ENCODE measurements at regions of chr2 and their contacts with region 1.

Region 1: DNA sequence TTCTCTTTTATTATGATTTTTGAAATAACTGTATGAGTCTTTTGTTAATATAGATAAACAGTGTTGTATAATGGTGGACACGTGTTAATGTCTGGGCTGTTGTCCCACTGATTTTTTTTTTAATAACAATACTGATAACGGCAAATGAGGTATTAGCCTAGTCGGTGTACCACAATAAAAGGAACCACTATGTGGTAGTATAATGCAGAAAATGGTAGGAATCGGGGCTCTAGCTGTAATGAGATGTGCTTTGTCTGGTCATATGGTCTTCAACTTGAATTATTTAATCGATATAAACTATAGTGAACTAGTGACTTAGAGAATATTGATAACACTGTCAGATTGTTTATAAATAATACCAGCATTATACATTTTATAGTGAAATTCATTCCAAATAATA is 517.9 kb upstream of the SPHKAP start:
- DNase-seq: peak; percentile 5
- ATAC-seq: peak; percentile 45; the same call in 1 of the 2 replicates
- H3K4me3 ChIP-seq: no peak overlapping the region
- H3K27ac ChIP-seq: no peak overlapping the region
- H3K4me1 ChIP-seq: peaks cover 19% of the 10 kb centered on the region
- H3K27me3 ChIP-seq: no peaks in the 10 kb centered on the region
- CTCF ChIP-seq: peak; percentile 47; the same call in 1 of the 2 replicates

Region 2: DNA sequence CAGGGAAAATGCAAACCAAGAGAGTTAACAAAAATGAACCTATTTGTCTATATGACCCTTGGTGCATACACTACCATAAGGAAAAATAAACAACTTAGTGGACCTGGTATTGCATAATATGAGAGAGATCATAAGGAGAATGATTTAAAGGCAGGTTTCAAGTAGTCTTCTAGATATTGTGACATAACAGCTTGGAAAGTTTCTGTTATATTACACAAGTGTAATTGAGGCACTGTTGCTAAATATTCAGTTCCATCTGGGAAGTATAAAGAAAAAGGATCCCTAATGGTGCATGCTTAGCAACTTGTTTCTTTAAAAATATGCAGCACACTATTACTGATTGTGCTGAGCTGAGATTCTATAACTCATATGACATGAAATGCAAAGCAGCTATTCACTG is 265.7 kb before region 1 on chr2:
- CTCF ChIA-PET with region 1: no interaction called
- POLR2A ChIA-PET with region 1: no interaction called
- intact Hi-C with region 1: no loop called
- DNase-seq: no peak
- ATAC-seq: no peak
- H3K4me3 ChIP-seq: no peak overlapping the region
- H3K27ac ChIP-seq: no peak overlapping the region
- H3K4me1 ChIP-seq: no peaks in the 10 kb centered on the region
- H3K27me3 ChIP-seq: no peaks in the 10 kb centered on the region
- CTCF ChIP-seq: no peak

Region 3: DNA sequence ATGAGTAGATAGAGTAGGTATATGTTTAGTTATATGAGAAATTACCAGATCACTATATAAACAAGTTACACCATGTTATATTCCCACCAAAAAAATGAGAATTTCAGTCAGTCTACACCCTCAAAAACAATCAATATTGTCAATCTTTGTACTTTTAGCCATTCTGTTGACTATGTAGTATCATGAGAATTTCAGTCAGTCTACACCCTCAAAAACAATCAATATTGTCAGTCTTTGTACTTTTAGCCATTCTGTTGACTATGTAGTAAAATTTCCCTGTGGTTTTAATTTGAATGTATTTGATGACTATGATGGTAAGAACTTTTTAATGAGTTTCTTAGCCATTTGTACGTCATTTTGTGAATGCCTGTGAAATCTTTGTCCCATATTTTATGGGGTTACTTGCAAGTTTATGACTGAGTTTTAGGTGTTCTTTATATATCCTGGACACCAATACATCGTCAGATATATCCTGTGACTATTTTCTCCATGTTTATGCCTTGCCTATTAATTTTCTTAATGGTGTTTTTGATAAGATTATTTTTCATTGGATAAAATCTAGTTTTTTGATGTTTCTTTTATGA is 10.5 kb after region 1 on chr2:
- CTCF ChIA-PET with region 1: no interaction called
- POLR2A ChIA-PET with region 1: no interaction called
- intact Hi-C with region 1: loop called (anchors 1 kb)
- DNase-seq: peak; percentile 38
- ATAC-seq: peak; percentile 96
- H3K4me3 ChIP-seq: no peak overlapping the region
- H3K27ac ChIP-seq: peak overlapping the region; percentile 63
- H3K4me1 ChIP-seq: peaks cover 12% of the 10 kb centered on the region; the same call in 1 of the 2 replicates
- H3K27me3 ChIP-seq: no peaks in the 10 kb centered on the region
- CTCF ChIP-seq: no peak

Region 4: GRCh38 chr2:229133155-229133772 is 433.9 kb after region 1 on chr2:
- CTCF ChIA-PET with region 1: no interaction called
- POLR2A ChIA-PET with region 1: no interaction called
- intact Hi-C with region 1: loop called (anchors 5 kb)
- DNase-seq: peak; percentile 78
- ATAC-seq: peak; percentile 75
- H3K4me3 ChIP-seq: no peak overlapping the region
- H3K27ac ChIP-seq: no peak overlapping the region
- H3K4me1 ChIP-seq: no peaks in the 10 kb centered on the region
- H3K27me3 ChIP-seq: peaks cover 6% of the 10 kb centered on the region; the same call in 1 of the 2 replicates
- CTCF ChIP-seq: peak; percentile 84

Measured in PC-3 (cell line).